Activated CD4-positive, alpha-beta memory T cell treated with anti-CD3 and anti-CD28 coated beads for 36 hours (primary cell): ENCODE measurements at regions of chr3 and their contacts with region 1.

Region 1: GRCh38 chr3:58630076-58630709 is 36.4 kb downstream of the FAM3D start:
- DNase-seq: peak; percentile 72
- H3K4me3 Mint-ChIP-seq: no peak overlapping the region
- H3K27ac Mint-ChIP-seq: no peak overlapping the region
- H3K4me1 Mint-ChIP-seq: no peaks in the 10 kb centered on the region
- H3K27me3 Mint-ChIP-seq: peaks cover 6% of the 10 kb centered on the region

Region 2: GRCh38 chr3:58324391-58325390 is 305.5 kb before region 1 on chr3:
- CTCF ChIA-PET with region 1: no interaction called
- POLR2A ChIA-PET with region 1: no interaction called
- intact Hi-C with region 1: loop called (anchors 5 kb)
- DNase-seq: no peak
- H3K4me3 Mint-ChIP-seq: peak overlapping the region; percentile 34
- H3K27ac Mint-ChIP-seq: peak overlapping the region; percentile 93
- H3K4me1 Mint-ChIP-seq: peaks cover 37% of the 10 kb centered on the region
- H3K27me3 Mint-ChIP-seq: no peaks in the 10 kb centered on the region

Region 3: GRCh38 chr3:58463181-58463941 is 166.8 kb before region 1 on chr3:
- CTCF ChIA-PET with region 1: interaction called, 5 read pairs
- POLR2A ChIA-PET with region 1: no interaction called
- intact Hi-C with region 1: loop called (anchors 5 kb)
- DNase-seq: peak; percentile 90
- H3K4me3 Mint-ChIP-seq: no peak overlapping the region
- H3K27ac Mint-ChIP-seq: peak overlapping the region; percentile 54
- H3K4me1 Mint-ChIP-seq: peaks cover 17% of the 10 kb centered on the region
- H3K27me3 Mint-ChIP-seq: no peaks in the 10 kb centered on the region

Region 4: GRCh38 chr3:58560771-58561311 is 69.4 kb before region 1 on chr3:
- CTCF ChIA-PET with region 1: interaction called, 223 read pairs
- POLR2A ChIA-PET with region 1: no interaction called
- intact Hi-C with region 1: no loop called
- DNase-seq: no peak
- H3K4me3 Mint-ChIP-seq: no peak overlapping the region
- H3K27ac Mint-ChIP-seq: no peak overlapping the region
- H3K4me1 Mint-ChIP-seq: no peaks in the 10 kb centered on the region
- H3K27me3 Mint-ChIP-seq: no peaks in the 10 kb centered on the region

Region 5: GRCh38 chr3:58568572-58569286 is 61.5 kb before region 1 on chr3:
- CTCF ChIA-PET with region 1: interaction called, 223 read pairs
- POLR2A ChIA-PET with region 1: no interaction called
- intact Hi-C with region 1: loop called (anchors 1 kb)
- DNase-seq: peak; percentile 86
- H3K4me3 Mint-ChIP-seq: no peak overlapping the region
- H3K27ac Mint-ChIP-seq: no peak overlapping the region
- H3K4me1 Mint-ChIP-seq: peaks cover 4% of the 10 kb centered on the region
- H3K27me3 Mint-ChIP-seq: no peaks in the 10 kb centered on the region

Region 6: DNA sequence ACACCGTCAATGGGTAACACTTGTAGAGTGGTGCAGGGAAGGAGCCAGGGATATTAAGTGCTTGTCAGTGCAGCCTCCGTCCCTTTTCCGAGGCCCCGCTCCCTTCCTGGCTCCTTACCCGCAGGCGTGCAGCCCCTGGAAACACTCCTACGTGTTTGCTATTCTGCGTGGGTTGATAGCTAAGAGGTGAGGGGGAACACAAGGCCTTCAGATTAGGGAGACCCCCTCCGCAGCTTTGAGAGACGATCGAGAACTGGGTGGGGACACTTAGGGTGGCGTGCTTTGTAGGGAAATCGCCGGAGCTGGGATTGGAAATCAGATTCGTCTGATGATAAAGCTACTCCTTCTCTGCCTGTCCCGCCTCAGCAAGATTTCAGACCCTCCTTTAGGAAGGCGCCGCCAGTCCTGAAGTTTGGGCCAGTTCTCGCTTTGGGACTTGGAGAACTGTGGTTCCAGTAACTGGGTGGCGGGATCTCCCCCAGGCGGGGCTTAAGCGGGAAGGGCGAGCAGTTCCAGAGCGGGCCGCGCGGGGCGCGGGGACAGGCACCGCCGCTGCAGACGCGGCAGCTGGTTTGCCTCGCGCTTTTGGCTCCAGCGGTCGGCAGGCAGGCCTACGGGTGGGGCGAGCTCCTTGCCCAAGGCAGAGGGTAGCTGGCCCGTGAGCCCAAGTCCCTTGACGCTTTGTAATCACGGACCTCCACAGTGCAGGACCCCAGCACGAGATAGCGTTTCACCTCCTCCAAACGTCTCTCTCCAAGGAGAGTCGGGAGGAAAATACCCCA is 45.0 kb before region 1 on chr3:
- CTCF ChIA-PET with region 1: interaction called, 13 read pairs
- POLR2A ChIA-PET with region 1: no interaction called
- intact Hi-C with region 1: no loop called
- DNase-seq: peak; percentile 78
- H3K4me3 Mint-ChIP-seq: peak overlapping the region; percentile 78
- H3K27ac Mint-ChIP-seq: no peak overlapping the region
- H3K4me1 Mint-ChIP-seq: peaks cover 12% of the 10 kb centered on the region
- H3K27me3 Mint-ChIP-seq: peaks cover 29% of the 10 kb centered on the region

Region 7: DNA sequence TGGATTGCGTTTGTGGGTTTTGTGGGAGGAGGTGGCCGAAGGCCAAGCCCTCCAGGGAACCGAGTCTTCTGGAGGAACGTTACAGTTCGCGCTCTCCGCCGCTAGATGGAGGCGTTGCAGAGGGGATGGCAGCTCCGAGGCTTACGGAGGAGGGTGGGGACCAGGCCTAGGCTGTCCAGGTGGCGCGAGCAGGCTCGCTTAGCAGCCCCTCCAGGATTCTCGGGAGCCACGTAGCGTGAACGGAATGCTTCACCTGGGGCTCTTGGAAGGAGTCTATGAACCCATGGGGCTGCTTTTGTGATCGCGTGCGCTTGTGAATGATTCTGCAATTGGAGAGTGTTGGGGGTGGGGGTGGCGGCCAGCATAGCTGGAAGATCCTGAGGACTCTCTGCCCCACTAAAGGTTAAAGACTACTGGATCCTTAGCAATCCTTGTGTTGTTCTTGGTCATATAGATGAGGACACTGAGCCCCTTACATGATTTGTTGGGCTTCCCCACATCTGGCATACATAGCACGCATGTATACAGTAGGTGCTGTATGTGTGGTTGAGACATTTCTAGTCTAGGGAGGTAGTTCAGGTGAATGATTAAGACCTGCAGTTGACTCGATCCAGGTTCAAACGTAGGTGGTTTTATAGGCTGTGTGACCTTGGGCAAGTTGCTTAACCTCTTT is 10.6 kb after region 1 on chr3:
- CTCF ChIA-PET with region 1: interaction called, 20 read pairs
- POLR2A ChIA-PET with region 1: no interaction called
- intact Hi-C with region 1: no loop called
- DNase-seq: peak; percentile 71
- H3K4me3 Mint-ChIP-seq: no peak overlapping the region
- H3K27ac Mint-ChIP-seq: no peak overlapping the region
- H3K4me1 Mint-ChIP-seq: no peaks in the 10 kb centered on the region
- H3K27me3 Mint-ChIP-seq: no peaks in the 10 kb centered on the region